Activated CD4-positive, alpha-beta memory T cell treated with anti-CD3 and anti-CD28 coated beads for 36 hours (primary cell): ENCODE measurements at regions of chr10 and their contacts with region 1.

Region 1: DNA sequence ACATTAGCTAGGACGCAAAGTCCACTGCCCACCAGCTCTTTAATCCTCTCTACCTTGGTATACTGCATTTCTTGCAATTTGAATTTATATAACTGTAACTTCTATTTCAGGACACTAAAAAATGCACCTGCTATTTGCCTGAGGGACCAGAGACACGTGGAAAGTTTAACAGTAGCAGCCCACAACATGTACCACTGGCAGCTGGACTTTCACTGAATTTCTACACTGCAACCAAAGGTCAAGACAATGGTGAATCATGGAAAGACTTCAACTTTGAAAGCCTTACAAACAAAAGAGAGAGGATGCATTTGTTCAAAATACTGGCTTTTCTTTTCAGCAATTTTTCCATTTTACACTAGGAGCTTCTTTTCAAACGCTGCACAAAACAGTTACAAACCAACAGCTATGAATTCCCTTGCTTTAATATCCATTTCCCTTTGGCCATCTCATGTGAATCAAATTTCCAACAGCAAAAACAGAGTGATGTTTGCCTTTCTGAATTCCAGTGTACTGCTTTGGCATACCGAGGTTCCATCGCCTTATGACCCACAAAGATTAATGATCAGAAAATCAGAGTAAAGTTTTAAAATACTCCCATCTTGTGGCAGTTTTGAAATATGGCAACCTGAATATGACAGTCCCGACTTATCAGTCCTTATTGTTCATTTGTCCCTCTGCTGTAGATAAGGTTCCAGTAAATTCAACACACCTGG is 29.9 kb upstream of the HNRNPH3 start:
- DNase-seq: no peak
- H3K4me3 Mint-ChIP-seq: no peak overlapping the region
- H3K27ac Mint-ChIP-seq: no peak overlapping the region
- H3K4me1 Mint-ChIP-seq: no peaks in the 10 kb centered on the region
- H3K27me3 Mint-ChIP-seq: no peaks in the 10 kb centered on the region

Region 2: GRCh38 chr10:67861750-67862460 is 440.0 kb before region 1 on chr10:
- CTCF ChIA-PET with region 1: interaction called, 11 read pairs
- POLR2A ChIA-PET with region 1: no interaction called
- intact Hi-C with region 1: no loop called
- DNase-seq: no peak
- H3K4me3 Mint-ChIP-seq: no peak overlapping the region
- H3K27ac Mint-ChIP-seq: no peak overlapping the region
- H3K4me1 Mint-ChIP-seq: no peaks in the 10 kb centered on the region
- H3K27me3 Mint-ChIP-seq: no peaks in the 10 kb centered on the region

Region 3: GRCh38 chr10:68121852-68122251 is 180.1 kb before region 1 on chr10:
- CTCF ChIA-PET with region 1: no interaction called
- POLR2A ChIA-PET with region 1: no interaction called
- intact Hi-C with region 1: no loop called
- DNase-seq: no peak
- H3K4me3 Mint-ChIP-seq: no peak overlapping the region
- H3K27ac Mint-ChIP-seq: no peak overlapping the region
- H3K4me1 Mint-ChIP-seq: no peaks in the 10 kb centered on the region
- H3K27me3 Mint-ChIP-seq: no peaks in the 10 kb centered on the region